A549 (cell line): ENCODE measurements at regions of chr5 and their contacts with region 1.

Region 1: GRCh38 chr5:180328296-180329137 is 24.6 kb downstream of the GFPT2 start:
- DNase-seq: peak; percentile 88 to 89
- ATAC-seq: peak; percentile 48 to 72; a peak in 5 of 6 replicates
- H3K4me3 ChIP-seq: no peak overlapping the region
- H3K27ac ChIP-seq: peak overlapping the region; percentile 75 to 86; a peak in 5 of 6 replicates
- H3K4me1 ChIP-seq: peaks cover 60% of the 10 kb centered on the region
- CTCF ChIP-seq: peak; percentile 89
- EP300 ChIP-seq: no peak
- POLR2A ChIP-seq: no peak
- RAD21 ChIP-seq: peak; percentile 71 to 74

Region 2: GRCh38 chr5:179994583-179995323 is 333.8 kb before region 1 on chr5:
- CTCF ChIA-PET with region 1: no interaction called
- POLR2A ChIA-PET with region 1: no interaction called
- DNase-seq: no peak
- ATAC-seq: no peak; a peak in 1 of 6 replicates
- H3K4me3 ChIP-seq: no peak overlapping the region
- H3K27ac ChIP-seq: no peak overlapping the region
- H3K4me1 ChIP-seq: no peaks in the 10 kb centered on the region
- CTCF ChIP-seq: no peak
- EP300 ChIP-seq: no peak
- POLR2A ChIP-seq: no peak
- RAD21 ChIP-seq: no peak

Region 3: DNA sequence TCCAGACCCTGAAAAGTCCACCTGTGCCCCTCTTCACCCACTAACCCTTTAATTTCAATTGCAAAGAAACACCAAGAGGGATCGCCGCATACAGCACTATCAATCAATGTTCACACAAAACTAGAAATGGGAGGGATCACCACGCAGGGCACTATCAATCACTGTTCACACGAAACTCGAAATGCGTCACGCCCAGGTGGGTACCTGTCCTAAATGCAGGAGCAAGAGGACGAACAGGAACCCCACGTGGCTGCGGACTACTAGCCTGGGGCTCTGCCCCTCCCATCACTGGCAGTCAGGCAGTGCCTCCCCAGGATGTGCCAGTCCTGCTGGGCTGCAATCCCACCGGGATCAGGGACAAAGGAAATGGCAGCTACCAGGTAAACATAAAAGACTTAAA is 147.7 kb before region 1 on chr5:
- CTCF ChIA-PET with region 1: no interaction called
- POLR2A ChIA-PET with region 1: no interaction called
- DNase-seq: no peak
- ATAC-seq: no peak
- H3K4me3 ChIP-seq: no peak overlapping the region
- H3K27ac ChIP-seq: no peak overlapping the region
- H3K4me1 ChIP-seq: no peaks in the 10 kb centered on the region; the same call in 2 of the 3 replicates
- CTCF ChIP-seq: no peak
- EP300 ChIP-seq: no peak
- POLR2A ChIP-seq: no peak
- RAD21 ChIP-seq: no peak

Region 4: DNA sequence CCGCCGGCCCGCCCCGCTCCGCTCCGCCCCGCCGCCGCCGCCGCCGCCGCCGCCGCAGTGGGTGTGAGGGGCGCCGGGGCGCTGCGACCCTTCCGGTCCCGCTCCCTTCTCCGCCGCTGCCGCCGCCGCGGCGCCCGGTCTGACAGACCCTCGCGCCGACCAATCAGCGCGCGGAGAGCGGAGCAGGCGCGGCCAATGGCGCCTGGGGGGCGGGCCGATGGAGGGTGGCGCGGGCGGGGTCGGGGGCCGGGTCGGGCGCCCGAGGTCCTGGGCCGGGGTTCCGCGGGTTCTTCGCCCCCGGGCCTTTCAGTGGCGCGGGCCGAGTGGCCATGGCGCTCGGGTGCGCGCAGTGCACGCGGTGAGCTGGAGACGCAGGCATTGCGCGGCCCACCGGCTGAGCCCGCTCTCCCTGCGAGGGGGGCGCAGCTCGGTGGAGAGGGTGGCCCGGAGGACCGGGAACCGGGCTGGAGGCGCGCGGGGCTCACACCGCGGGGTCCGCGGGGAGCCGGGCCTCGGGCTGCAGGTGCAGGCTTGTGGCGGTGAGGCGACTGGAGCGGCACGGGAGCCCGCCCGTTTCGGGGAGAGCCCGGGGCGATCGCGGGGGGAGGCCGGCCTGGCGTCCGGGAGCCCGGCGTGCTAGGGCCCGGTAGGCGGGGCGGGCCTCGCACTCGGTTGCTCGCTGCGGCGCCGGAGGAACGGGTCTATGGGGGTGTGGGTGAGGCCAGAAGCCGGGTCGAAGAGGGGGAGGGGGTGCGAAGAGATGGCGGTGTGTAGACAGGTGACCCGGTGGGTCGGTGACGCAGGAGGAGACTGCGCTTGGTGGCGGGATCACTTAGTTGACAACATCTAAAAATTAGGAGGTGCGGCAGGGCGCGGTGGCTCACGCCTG is 36.3 kb before region 1 on chr5 and contains the start of gene MAPK9:
- CTCF ChIA-PET with region 1: interaction called, 250 read pairs
- POLR2A ChIA-PET with region 1: interaction called, 4 read pairs
- DNase-seq: peak; percentile 76 to 77
- ATAC-seq: peak; percentile 82 to 83
- H3K4me3 ChIP-seq: peak within 1 kb of the TSS; percentile 74
- H3K27ac ChIP-seq: peak within 1 kb of the TSS; percentile 85 to 97
- H3K4me1 ChIP-seq: peaks cover 18% of the 10 kb centered on the region
- CTCF ChIP-seq: no peak; the same call in 2 of the 3 replicates
- EP300 ChIP-seq: no peak
- POLR2A ChIP-seq: peak; percentile 71
- RAD21 ChIP-seq: no peak
- polyA plus RNA-seq, gene MAPK9: 52.7 and 66.9 TPM in 2 replicates

Region 5: DNA sequence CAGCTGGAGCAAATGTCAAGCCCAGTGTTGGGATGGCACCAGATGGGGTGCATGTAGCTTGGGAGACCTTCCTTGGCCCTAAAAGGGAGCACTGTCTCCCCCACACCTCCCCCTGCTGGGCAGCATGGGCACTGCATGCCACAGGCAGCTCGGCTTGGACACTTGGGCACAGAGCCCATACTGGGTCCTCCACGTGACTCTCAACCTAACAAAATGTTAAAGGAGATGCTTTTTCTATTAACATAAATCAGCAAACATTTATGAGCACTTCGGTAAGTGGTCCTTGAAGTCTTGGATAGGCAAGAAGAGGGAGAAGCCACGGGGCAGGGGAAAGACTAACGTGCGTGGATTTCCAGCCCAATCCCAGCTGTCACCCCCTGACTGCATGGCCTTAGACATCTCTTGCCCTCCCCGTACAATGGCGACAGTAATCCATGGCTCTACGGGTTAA is 12.7 kb before region 1 on chr5:
- CTCF ChIA-PET with region 1: interaction called, 110 read pairs
- POLR2A ChIA-PET with region 1: interaction called, 3 read pairs
- DNase-seq: peak; percentile 54 to 67
- ATAC-seq: peak; percentile 85 to 95
- H3K4me3 ChIP-seq: no peak overlapping the region
- H3K27ac ChIP-seq: no peak overlapping the region
- H3K4me1 ChIP-seq: no peaks in the 10 kb centered on the region
- CTCF ChIP-seq: peak; percentile 78
- EP300 ChIP-seq: no peak
- POLR2A ChIP-seq: no peak
- RAD21 ChIP-seq: peak; percentile 56 to 66

Region 6: DNA sequence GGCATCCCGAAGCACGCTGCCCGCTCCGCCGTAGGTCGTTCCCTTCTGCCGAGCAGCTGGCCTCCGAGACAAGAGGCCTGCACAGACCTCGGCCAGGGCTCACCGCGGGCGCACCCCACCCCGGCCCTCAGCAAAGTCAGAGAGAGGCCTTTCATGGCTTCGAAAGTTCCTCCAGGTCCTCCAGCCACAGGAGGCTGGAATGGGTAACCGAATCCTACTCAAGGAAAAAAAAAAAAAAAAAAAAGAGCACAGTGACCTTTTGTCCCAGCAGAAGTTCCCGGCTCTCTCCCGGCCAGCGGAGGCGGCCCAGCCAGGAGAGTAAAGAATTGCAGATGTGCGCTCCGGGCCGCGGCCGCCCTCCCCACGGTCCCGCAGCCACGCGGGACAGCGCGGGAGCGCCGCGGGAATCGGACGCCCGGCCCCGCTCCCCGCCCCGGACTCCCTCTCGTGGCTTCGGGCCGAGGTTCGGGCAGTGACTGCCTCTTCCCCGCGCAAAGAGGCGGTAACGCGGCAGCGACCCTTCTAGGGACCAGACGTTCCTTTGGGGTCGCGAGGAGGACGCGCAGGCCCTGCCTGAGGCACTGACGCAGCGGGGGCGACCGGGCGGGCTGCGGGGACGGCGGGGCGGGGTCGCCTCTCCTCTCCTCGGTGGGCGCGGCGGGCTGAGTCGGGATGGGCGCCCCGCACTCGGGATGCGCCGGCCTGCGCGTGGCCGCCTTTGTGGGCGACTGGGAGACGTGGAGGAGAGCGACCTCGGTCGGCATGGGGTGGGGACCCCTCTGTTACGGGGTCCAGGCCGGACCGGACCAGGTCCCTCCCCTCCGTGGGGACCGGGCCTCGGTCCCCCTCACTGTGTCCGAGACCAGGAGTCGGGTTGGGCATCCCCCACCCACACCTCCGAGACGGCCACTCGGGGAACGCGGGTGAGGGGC is 23.9 kb after region 1 on chr5:
- CTCF ChIA-PET with region 1: interaction called, 13 read pairs
- POLR2A ChIA-PET with region 1: interaction called, 4 read pairs
- DNase-seq: peak in 1 of 2 experiments; percentile 42
- ATAC-seq: peak; percentile 20 to 32
- H3K4me3 ChIP-seq: peak overlapping the region; percentile 93
- H3K27ac ChIP-seq: peak overlapping the region; percentile 74 to 85
- H3K4me1 ChIP-seq: peaks cover 10% of the 10 kb centered on the region
- CTCF ChIP-seq: no peak
- EP300 ChIP-seq: no peak
- POLR2A ChIP-seq: no peak
- RAD21 ChIP-seq: 0 out of 5 replicates have a peak, but pooled peaks of 1 of the 2 experiments have one; percentile 21

Region 7: DNA sequence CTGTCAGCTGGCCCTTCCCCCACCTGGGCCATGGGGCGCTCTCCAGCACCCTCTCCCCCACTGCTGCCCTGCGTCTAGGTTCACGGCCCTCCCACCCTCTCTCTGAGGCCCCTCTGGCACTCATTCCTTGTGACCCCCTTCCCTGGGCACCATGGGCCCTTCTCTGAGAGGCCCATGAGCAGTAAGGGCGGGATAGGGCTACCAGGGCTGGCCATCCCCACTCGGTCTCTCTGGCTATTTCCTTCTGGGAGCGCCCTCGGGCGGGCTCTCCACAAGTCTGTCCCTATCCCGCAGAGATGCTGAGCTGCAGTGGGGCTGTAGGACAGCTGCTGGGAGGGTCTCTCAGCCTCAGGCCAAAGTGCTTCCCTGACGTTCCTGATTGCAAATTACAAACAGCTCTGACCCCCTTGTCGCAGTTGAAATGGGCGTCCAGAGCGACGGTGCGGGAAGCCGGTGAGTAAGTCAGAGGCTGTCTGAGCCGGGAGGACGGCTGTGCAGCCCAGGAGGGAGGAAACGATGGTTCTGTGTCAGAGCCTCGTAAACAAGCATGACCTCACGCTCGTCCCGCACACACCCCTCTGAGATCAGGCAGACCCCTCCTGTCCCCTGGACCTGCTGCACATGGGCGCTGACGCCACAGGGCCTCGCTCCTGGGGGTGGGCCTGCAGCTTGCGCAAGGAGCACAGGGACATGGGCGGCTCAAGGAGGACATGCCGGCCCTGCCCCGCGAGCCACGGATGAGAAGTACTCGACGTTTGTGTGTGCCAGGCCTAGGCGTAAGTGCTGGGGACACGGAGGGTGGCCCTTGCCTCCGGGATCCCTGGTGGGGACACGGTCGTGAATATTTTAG is 61.0 kb after region 1 on chr5:
- CTCF ChIA-PET with region 1: interaction called, 11 read pairs
- POLR2A ChIA-PET with region 1: no interaction called
- DNase-seq: no peak
- ATAC-seq: peak; percentile 31 to 34
- H3K4me3 ChIP-seq: no peak overlapping the region
- H3K27ac ChIP-seq: no peak overlapping the region
- H3K4me1 ChIP-seq: no peaks in the 10 kb centered on the region
- CTCF ChIP-seq: no peak
- EP300 ChIP-seq: no peak
- POLR2A ChIP-seq: no peak
- RAD21 ChIP-seq: no peak

Region 8: DNA sequence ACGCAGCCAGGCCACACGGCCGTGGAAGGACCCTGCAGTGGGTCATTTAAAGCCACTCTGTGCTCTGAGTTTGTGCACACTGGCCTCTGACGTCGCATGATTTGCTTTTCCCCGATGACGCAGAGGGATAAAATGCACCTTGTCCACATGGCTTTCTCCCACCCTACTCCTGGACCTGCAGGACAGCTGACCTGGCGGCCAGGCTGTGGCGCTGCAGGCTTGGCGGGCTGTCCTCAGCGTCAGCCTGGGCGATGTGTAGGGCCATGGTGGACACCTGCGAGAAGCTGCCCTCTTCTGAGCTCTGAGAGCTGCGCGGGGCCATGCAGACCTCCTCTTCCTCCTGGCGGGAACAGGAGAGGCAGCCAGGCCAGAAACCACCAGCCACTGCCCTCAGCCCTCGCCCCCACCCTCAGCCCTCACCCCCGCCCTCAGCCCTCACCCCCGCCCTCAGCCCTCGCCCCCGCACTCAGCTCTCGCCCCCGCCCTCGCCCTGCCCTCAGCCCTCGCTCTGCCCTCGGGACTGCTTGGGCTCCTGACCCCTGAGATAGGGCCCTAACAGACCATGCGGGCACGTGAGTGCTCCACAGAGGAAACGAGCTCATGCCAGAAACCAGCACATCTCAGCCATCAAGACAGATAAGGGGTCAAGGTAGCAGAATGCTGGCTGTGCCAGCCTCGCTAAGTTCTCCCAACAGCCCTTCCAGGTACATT is 282.8 kb after region 1 on chr5:
- CTCF ChIA-PET with region 1: no interaction called
- POLR2A ChIA-PET with region 1: no interaction called
- DNase-seq: peak; percentile 33 to 69
- ATAC-seq: peak; percentile 42 to 88; a peak in 3 of 6 replicates
- H3K4me3 ChIP-seq: no peak overlapping the region
- H3K27ac ChIP-seq: no peak overlapping the region
- H3K4me1 ChIP-seq: no peaks in the 10 kb centered on the region
- CTCF ChIP-seq: 0 out of 3 replicates have a peak, but pooled peaks have one; percentile 18
- EP300 ChIP-seq: no peak
- POLR2A ChIP-seq: no peak
- RAD21 ChIP-seq: peak; percentile 27 to 53; a peak in 4 of 5 replicates